ENCODE measurements at regions of chr6 and their contacts with region 1.

Region 1: DNA sequence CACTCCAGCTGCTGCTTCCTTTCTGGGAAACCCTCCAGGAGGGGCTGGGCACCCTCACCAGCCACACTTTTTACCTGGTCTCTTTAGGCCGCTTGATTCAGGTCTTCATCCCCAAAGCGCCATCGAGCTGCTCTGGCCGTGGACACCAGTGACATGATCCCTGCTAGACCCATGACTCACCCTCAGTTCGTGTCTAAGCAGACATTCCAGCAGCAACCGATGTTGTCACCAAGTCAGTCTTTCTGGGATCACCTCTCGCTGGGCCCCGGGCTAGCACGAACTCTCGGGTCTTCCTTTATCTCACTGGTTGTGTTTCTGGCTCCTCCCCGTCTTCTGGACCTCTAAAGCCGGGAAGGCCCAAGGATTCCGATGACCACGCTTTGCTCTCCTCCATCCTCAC is 43.0 kb upstream of the GPR31 start:
- DNase-seq: no peak
- H3K4me3 ChIP-seq: no peak overlapping the region
- H3K4me3 Mint-ChIP-seq: no peak overlapping the region
- H3K27ac ChIP-seq: no peak overlapping the region
- H3K27ac Mint-ChIP-seq: peak overlapping the region in 1 of 7 donors; percentile 25
- H3K4me1 ChIP-seq: no peaks in the 10 kb centered on the region
- H3K4me1 Mint-ChIP-seq: no peaks in the 10 kb centered on the region
- H3K27me3 ChIP-seq: no peaks in the 10 kb centered on the region
- H3K27me3 Mint-ChIP-seq: peaks cover 11 to 30% (median 17%) of the 10 kb centered on the region in 3 donors
- CTCF ChIP-seq: no peak

Region 2: GRCh38 chr6:167356874-167357273 is 156.1 kb after region 1 on chr6:
- intact Hi-C with region 1: loop called (anchors 10 kb)
- DNase-seq: no peak
- H3K4me3 ChIP-seq: no peak overlapping the region
- H3K4me3 Mint-ChIP-seq: no peak overlapping the region
- H3K27ac ChIP-seq: no peak overlapping the region
- H3K27ac Mint-ChIP-seq: no peak overlapping the region
- H3K4me1 ChIP-seq: no peaks in the 10 kb centered on the region
- H3K4me1 Mint-ChIP-seq: no peaks in the 10 kb centered on the region
- H3K27me3 ChIP-seq: peaks cover under 1 to 4% of the 10 kb centered on the region in 2 donors
- H3K27me3 Mint-ChIP-seq: peaks cover 7 to 15% (median 7%) of the 10 kb centered on the region in 3 donors
- CTCF ChIP-seq: no peak